CD4-positive, alpha-beta T cell (primary cell): ENCODE measurements at regions of chr1 and their contacts with region 1.

Region 1: GRCh38 chr1:67214420-67215174 is 48.3 kb downstream of the IL23R start:
- DNase-seq: peak in 12 of 14 experiments; percentile 13 to 64 (median 31)
- ATAC-seq: peak; percentile 49
- H3K4me3 ChIP-seq: no peak overlapping the region
- H3K4me3 Mint-ChIP-seq: no peak overlapping the region
- H3K27ac ChIP-seq: no peak overlapping the region
- H3K27ac Mint-ChIP-seq: no peak overlapping the region
- H3K4me1 ChIP-seq: peaks cover 7% of the 10 kb centered on the region
- H3K4me1 Mint-ChIP-seq: peaks cover 26% of the 10 kb centered on the region
- H3K27me3 ChIP-seq: no peaks in the 10 kb centered on the region
- H3K27me3 Mint-ChIP-seq: no peaks in the 10 kb centered on the region
- CTCF ChIP-seq: peak; percentile 69

Region 2: GRCh38 chr1:66996018-66996682 is 218.4 kb before region 1 on chr1:
- CTCF ChIA-PET with region 1: no interaction called
- POLR2A ChIA-PET with region 1: interaction called, 3 read pairs
- intact Hi-C with region 1: loop called (anchors 1 to 5 kb)
- DNase-seq: peak; percentile 32 to 78 (median 52)
- ATAC-seq: peak; percentile 89
- H3K4me3 ChIP-seq: no peak overlapping the region
- H3K4me3 Mint-ChIP-seq: no peak overlapping the region
- H3K27ac ChIP-seq: no peak overlapping the region
- H3K27ac Mint-ChIP-seq: peak overlapping the region; percentile 2
- H3K4me1 ChIP-seq: peaks cover 5% of the 10 kb centered on the region
- H3K4me1 Mint-ChIP-seq: peaks cover 28% of the 10 kb centered on the region
- H3K27me3 ChIP-seq: no peaks in the 10 kb centered on the region
- H3K27me3 Mint-ChIP-seq: no peaks in the 10 kb centered on the region
- CTCF ChIP-seq: peak; percentile 73

Region 3: DNA sequence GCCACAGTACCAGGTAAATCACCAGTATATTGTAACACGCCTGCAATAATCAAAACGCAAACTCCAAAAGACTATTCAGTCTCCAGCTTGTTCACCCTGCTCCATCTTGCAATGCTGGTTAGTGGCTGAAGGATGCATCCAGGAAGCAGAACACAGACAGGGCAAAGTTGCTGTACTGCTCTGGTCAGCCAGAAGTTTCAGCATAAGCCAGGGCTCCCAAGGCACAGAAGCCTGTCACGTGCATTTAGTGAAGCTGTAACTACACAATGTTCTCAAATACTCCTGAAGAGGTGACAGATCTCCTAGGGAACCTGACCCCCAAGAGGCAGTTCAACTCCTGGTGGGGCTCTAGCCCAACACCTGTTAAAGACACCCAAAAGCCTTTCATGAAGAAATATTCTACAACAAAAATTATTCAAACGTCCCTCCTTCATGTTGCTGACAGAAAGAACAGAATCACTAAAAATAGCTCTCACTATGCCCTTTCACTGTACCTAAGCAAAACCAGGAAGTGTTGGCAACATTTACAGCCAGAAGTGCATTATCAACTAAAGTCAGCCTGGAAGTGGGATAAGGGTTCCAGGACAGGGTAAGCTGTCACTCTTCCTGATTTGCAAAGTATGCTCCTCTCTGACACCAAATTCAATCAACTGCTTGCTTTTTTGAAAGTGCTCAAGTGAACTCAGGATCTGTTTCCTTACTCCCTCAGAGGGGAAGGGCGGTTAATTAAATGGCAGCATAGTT is 212.7 kb before region 1 on chr1:
- CTCF ChIA-PET with region 1: no interaction called
- POLR2A ChIA-PET with region 1: interaction called, 3 read pairs
- intact Hi-C with region 1: loop called in 1 of 2 experiments (anchors 5 kb)
- DNase-seq: no peak
- ATAC-seq: no peak
- H3K4me3 ChIP-seq: no peak overlapping the region
- H3K4me3 Mint-ChIP-seq: no peak overlapping the region
- H3K27ac ChIP-seq: no peak overlapping the region
- H3K27ac Mint-ChIP-seq: peak overlapping the region; percentile 56
- H3K4me1 ChIP-seq: no peaks in the 10 kb centered on the region
- H3K4me1 Mint-ChIP-seq: peaks cover 23% of the 10 kb centered on the region
- H3K27me3 ChIP-seq: no peaks in the 10 kb centered on the region
- H3K27me3 Mint-ChIP-seq: no peaks in the 10 kb centered on the region
- CTCF ChIP-seq: no peak

Region 4: GRCh38 chr1:67149179-67149770 is 65.3 kb before region 1 on chr1:
- CTCF ChIA-PET with region 1: interaction called, 24 read pairs
- POLR2A ChIA-PET with region 1: interaction called, 3 read pairs
- intact Hi-C with region 1: loop called (anchors 1 to 2 kb)
- DNase-seq: peak; percentile 32 to 83 (median 56)
- ATAC-seq: peak; percentile 93
- H3K4me3 ChIP-seq: no peak overlapping the region
- H3K4me3 Mint-ChIP-seq: no peak overlapping the region
- H3K27ac ChIP-seq: no peak overlapping the region
- H3K27ac Mint-ChIP-seq: no peak overlapping the region
- H3K4me1 ChIP-seq: peaks cover 9% of the 10 kb centered on the region
- H3K4me1 Mint-ChIP-seq: peaks cover 31% of the 10 kb centered on the region
- H3K27me3 ChIP-seq: no peaks in the 10 kb centered on the region
- H3K27me3 Mint-ChIP-seq: no peaks in the 10 kb centered on the region
- CTCF ChIP-seq: peak; percentile 85

Region 5: GRCh38 chr1:67166196-67166595 is 48.4 kb before region 1 on chr1 and contains the start of gene IL23R:
- CTCF ChIA-PET with region 1: interaction called, 6 read pairs
- POLR2A ChIA-PET with region 1: interaction called, 20 read pairs
- intact Hi-C with region 1: loop called (anchors 5 kb)
- DNase-seq: peak in 5 of 14 experiments; percentile 2 to 79 (median 49)
- ATAC-seq: peak; percentile 43
- H3K4me3 ChIP-seq: peak within 1 kb of the TSS; percentile 32
- H3K4me3 Mint-ChIP-seq: peak within 1 kb of the TSS; percentile 42
- H3K27ac ChIP-seq: no peak within 1 kb of the TSS
- H3K27ac Mint-ChIP-seq: peak within 1 kb of the TSS; percentile 11
- H3K4me1 ChIP-seq: peaks cover 16% of the 10 kb centered on the region
- H3K4me1 Mint-ChIP-seq: peaks cover 36% of the 10 kb centered on the region
- H3K27me3 ChIP-seq: peaks cover 0 to 3% of the 10 kb centered on the region in 2 experiments
- H3K27me3 Mint-ChIP-seq: peaks cover 6% of the 10 kb centered on the region
- CTCF ChIP-seq: no peak
- total RNA-seq, gene IL23R: 0.08 to 0.14 TPM

Region 6: DNA sequence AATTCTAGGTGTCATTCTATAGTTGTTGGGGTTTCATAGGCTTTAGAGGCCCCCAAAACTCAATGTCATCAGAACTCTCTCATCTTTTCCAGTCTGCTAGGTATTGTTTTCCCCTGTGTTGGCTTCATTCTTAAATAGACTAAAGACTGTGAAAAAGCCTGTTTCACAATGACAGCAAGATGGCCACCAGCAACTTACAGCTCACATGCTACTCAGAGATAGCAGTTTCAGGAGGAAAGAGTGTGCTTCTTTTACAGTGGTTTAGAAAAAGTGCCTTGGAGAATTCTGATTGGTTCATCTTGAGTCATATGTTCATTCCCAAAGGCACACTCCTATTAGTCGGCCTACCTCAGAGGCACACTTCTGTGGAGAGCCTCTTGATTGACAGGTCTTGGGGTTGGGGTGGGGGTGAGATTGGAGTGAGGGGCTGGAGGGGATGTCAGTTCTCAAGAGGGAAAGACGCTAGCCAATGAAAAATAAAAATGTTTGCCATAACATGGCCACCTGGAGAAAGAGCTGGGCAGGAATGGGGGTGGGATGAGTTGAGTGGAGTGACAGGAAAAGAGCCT is 39.8 kb before region 1 on chr1:
- CTCF ChIA-PET with region 1: interaction called, 3 read pairs
- POLR2A ChIA-PET with region 1: interaction called, 20 read pairs
- intact Hi-C with region 1: loop called (anchors 5 kb)
- DNase-seq: no peak
- ATAC-seq: no peak
- H3K4me3 ChIP-seq: no peak overlapping the region
- H3K4me3 Mint-ChIP-seq: no peak overlapping the region
- H3K27ac ChIP-seq: no peak overlapping the region
- H3K27ac Mint-ChIP-seq: no peak overlapping the region
- H3K4me1 ChIP-seq: peaks cover 13% of the 10 kb centered on the region
- H3K4me1 Mint-ChIP-seq: peaks cover 58% of the 10 kb centered on the region
- H3K27me3 ChIP-seq: no peaks in the 10 kb centered on the region
- H3K27me3 Mint-ChIP-seq: no peaks in the 10 kb centered on the region
- CTCF ChIP-seq: no peak

Region 7: GRCh38 chr1:67500413-67500959 is 285.9 kb after region 1 on chr1:
- CTCF ChIA-PET with region 1: interaction called, 22 read pairs
- POLR2A ChIA-PET with region 1: no interaction called
- intact Hi-C with region 1: loop called (anchors 1 kb)
- DNase-seq: peak; percentile 73 to 92 (median 81)
- ATAC-seq: peak; percentile 100
- H3K4me3 ChIP-seq: no peak overlapping the region
- H3K4me3 Mint-ChIP-seq: no peak overlapping the region
- H3K27ac ChIP-seq: no peak overlapping the region
- H3K27ac Mint-ChIP-seq: no peak overlapping the region
- H3K4me1 ChIP-seq: peaks cover 7% of the 10 kb centered on the region
- H3K4me1 Mint-ChIP-seq: no peaks in the 10 kb centered on the region
- H3K27me3 ChIP-seq: peaks cover 0 to 3% of the 10 kb centered on the region in 2 experiments
- H3K27me3 Mint-ChIP-seq: no peaks in the 10 kb centered on the region
- CTCF ChIP-seq: peak; percentile 99